Gastrocnemius medialis (tissue), 4 donors: ENCODE measurements at regions of chr6 and their contacts with region 1.

Region 1: GRCh38 chr6:149806127-149806526 is 56.6 kb downstream of the PCMT1 start:
- DNase-seq: no peak
- ATAC-seq: no peak
- H3K4me3 ChIP-seq: no peak overlapping the region
- H3K27ac ChIP-seq: no peak overlapping the region
- H3K4me1 ChIP-seq: peaks cover 3 to 6% of the 10 kb centered on the region in 2 donors
- H3K27me3 ChIP-seq: no peaks in the 10 kb centered on the region
- CTCF ChIP-seq: no peak
- POLR2A ChIP-seq: no peak

Region 2: DNA sequence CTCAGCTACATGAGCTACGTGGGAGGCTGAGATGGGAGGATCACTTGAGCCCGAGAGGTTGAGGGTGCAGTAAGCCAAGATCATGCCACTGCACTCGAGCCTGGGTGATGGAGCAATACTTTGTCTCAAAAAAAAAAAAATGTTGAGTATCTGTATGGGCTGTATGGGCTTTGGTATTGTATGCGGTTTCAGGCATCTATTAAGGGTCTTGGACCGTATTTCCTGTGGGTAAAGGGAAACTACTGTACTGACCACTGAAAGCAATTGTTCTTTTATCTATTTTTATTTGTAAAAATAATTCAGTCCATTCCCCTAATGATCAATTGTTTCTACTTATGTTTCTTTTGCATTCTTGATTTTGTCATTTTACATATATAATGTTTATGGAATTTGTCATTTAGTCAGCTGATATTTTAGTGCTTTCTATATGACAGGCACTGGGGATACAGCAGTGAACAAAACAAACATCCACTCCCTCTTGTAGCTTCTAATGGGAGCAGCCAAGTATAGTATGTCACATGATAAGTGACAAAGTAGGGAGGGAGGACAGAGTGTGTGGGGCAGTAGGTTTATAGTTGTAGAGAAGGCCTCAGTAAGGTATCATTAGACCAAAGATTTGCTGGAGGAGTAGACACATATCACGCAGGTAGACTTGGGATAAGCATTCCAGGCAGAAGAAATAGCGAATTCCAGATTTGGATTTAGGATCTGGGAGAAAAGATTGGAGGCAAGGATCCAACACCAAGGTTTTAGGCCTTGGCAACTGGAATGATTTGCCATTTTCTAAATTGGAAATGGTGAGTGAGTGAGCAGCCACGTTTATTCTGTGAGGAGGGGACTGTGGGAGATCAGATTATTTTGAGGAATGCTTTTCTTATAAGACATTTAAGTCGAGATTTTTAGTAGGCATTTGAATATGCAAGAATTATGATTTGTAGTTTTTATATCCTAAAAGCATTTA is 50.5 kb before region 1 on chr6:
- in situ Hi-C with region 1: no loop called
- intact Hi-C with region 1: loop called (anchors 5 kb)
- DNase-seq: no peak
- ATAC-seq: peak; percentile 85 to 87
- H3K4me3 ChIP-seq: peak overlapping the region in 1 of 4 donors; percentile 5
- H3K27ac ChIP-seq: peak overlapping the region; percentile 97 to 99 (median 98)
- H3K4me1 ChIP-seq: peaks cover 43 to 53% of the 10 kb centered on the region in 2 donors
- H3K27me3 ChIP-seq: no peaks in the 10 kb centered on the region
- CTCF ChIP-seq: no peak
- POLR2A ChIP-seq: peak in 1 of 2 donors; percentile 19